ENCODE measurements at regions of chr12 and their contacts with region 1.

Region 1: GRCh38 chr12:98397316-98398105 is 117.9 kb upstream of the TMPO start:
- DNase-seq: peak; percentile 78 to 80 (median 79)
- H3K4me3 ChIP-seq: peak overlapping the region in 1 of 2 donors; percentile 46
- H3K4me3 Mint-ChIP-seq: peak overlapping the region; percentile 84 to 93 (median 88)
- H3K27ac ChIP-seq: peak overlapping the region; percentile 35
- H3K27ac Mint-ChIP-seq: peak overlapping the region; percentile 61 to 93 (median 88)
- H3K4me1 ChIP-seq: peaks cover 22% of the 10 kb centered on the region
- H3K4me1 Mint-ChIP-seq: peaks cover 24 to 39% (median 27%) of the 10 kb centered on the region in 4 donors
- H3K27me3 ChIP-seq: no peaks in the 10 kb centered on the region
- H3K27me3 Mint-ChIP-seq: no peaks in the 10 kb centered on the region

Region 2: GRCh38 chr12:96578526-96579125 is 1818.9 kb before region 1 on chr12:
- CTCF ChIA-PET with region 1: interaction called, 4 read pairs
- POLR2A ChIA-PET with region 1: no interaction called
- intact Hi-C with region 1: loop called (anchors 1 kb)
- DNase-seq: peak; percentile 31 to 64 (median 55)
- H3K4me3 ChIP-seq: no peak overlapping the region
- H3K4me3 Mint-ChIP-seq: no peak overlapping the region
- H3K27ac ChIP-seq: no peak overlapping the region
- H3K27ac Mint-ChIP-seq: peak overlapping the region in 1 of 7 donors; percentile 43
- H3K4me1 ChIP-seq: no peaks in the 10 kb centered on the region
- H3K4me1 Mint-ChIP-seq: peaks cover 0 to 4% (median 0%) of the 10 kb centered on the region in 4 donors
- H3K27me3 ChIP-seq: no peaks in the 10 kb centered on the region
- H3K27me3 Mint-ChIP-seq: peaks cover 0 to 2% of the 10 kb centered on the region in 2 donors

Region 3: GRCh38 chr12:96985480-96986362 is 1411.8 kb before region 1 on chr12:
- CTCF ChIA-PET with region 1: interaction called, 5 read pairs
- POLR2A ChIA-PET with region 1: no interaction called
- intact Hi-C with region 1: loop called (anchors 1 kb)
- DNase-seq: peak; percentile 36 to 52 (median 43)
- H3K4me3 ChIP-seq: peak overlapping the region; percentile 41 to 69
- H3K4me3 Mint-ChIP-seq: peak overlapping the region; percentile 75 to 91 (median 86)
- H3K27ac ChIP-seq: no peak overlapping the region
- H3K27ac Mint-ChIP-seq: peak overlapping the region in 5 of 7 donors; percentile 40 to 83 (median 62)
- H3K4me1 ChIP-seq: peaks cover 14% of the 10 kb centered on the region
- H3K4me1 Mint-ChIP-seq: peaks cover 0 to 7% (median 2%) of the 10 kb centered on the region in 4 donors
- H3K27me3 ChIP-seq: peaks cover 10% of the 10 kb centered on the region
- H3K27me3 Mint-ChIP-seq: peaks cover 4 to 18% of the 10 kb centered on the region in 2 donors

Region 4: GRCh38 chr12:97308576-97309198 is 1088.8 kb before region 1 on chr12:
- CTCF ChIA-PET with region 1: interaction called, 3 read pairs
- POLR2A ChIA-PET with region 1: no interaction called
- intact Hi-C with region 1: loop called (anchors 1 kb)
- DNase-seq: peak in 4 of 5 donors; percentile 42 to 55 (median 49)
- H3K4me3 ChIP-seq: no peak overlapping the region
- H3K4me3 Mint-ChIP-seq: no peak overlapping the region
- H3K27ac ChIP-seq: no peak overlapping the region
- H3K27ac Mint-ChIP-seq: no peak overlapping the region
- H3K4me1 ChIP-seq: no peaks in the 10 kb centered on the region
- H3K4me1 Mint-ChIP-seq: peaks cover 0 to 3% (median under 1%) of the 10 kb centered on the region in 4 donors
- H3K27me3 ChIP-seq: no peaks in the 10 kb centered on the region
- H3K27me3 Mint-ChIP-seq: peaks cover 1 to 12% of the 10 kb centered on the region in 2 donors

Region 5: GRCh38 chr12:98137278-98137677 is 260.2 kb before region 1 on chr12:
- CTCF ChIA-PET with region 1: no interaction called
- POLR2A ChIA-PET with region 1: no interaction called
- intact Hi-C with region 1: no loop called
- DNase-seq: no peak
- H3K4me3 ChIP-seq: no peak overlapping the region
- H3K4me3 Mint-ChIP-seq: no peak overlapping the region
- H3K27ac ChIP-seq: no peak overlapping the region
- H3K27ac Mint-ChIP-seq: no peak overlapping the region
- H3K4me1 ChIP-seq: no peaks in the 10 kb centered on the region
- H3K4me1 Mint-ChIP-seq: peaks cover 0 to 3% (median 0%) of the 10 kb centered on the region in 4 donors
- H3K27me3 ChIP-seq: no peaks in the 10 kb centered on the region
- H3K27me3 Mint-ChIP-seq: peaks cover 2 to 5% of the 10 kb centered on the region in 2 donors

Region 6: GRCh38 chr12:98374006-98374405 is 23.5 kb before region 1 on chr12:
- CTCF ChIA-PET with region 1: interaction called, 11 read pairs
- POLR2A ChIA-PET with region 1: no interaction called
- intact Hi-C with region 1: no loop called
- DNase-seq: no peak
- H3K4me3 ChIP-seq: no peak overlapping the region
- H3K4me3 Mint-ChIP-seq: no peak overlapping the region
- H3K27ac ChIP-seq: no peak overlapping the region
- H3K27ac Mint-ChIP-seq: no peak overlapping the region
- H3K4me1 ChIP-seq: peaks cover 10% of the 10 kb centered on the region
- H3K4me1 Mint-ChIP-seq: peaks cover 15 to 19% (median 17%) of the 10 kb centered on the region in 4 donors
- H3K27me3 ChIP-seq: no peaks in the 10 kb centered on the region
- H3K27me3 Mint-ChIP-seq: peaks cover 24 to 27% of the 10 kb centered on the region in 2 donors

Measured in CD4-positive, alpha-beta memory T cell (primary cell).